Activated B cell treated with CpG ODN at 0.5 μM for 24 hours (primary cell): ENCODE measurements at regions of chr3 and their contacts with region 1.

Region 1: GRCh38 chr3:129439817-129440617 is at the starts of genes IFT122 and MBD4:
- DNase-seq: peak; percentile 92
- ATAC-seq: peak; percentile 83
- H3K4me3 Mint-ChIP-seq: peak within 1 kb of the TSS; percentile 96
- H3K27ac Mint-ChIP-seq: peak within 1 kb of the TSS; percentile 96
- H3K4me1 Mint-ChIP-seq: peaks cover 60% of the 10 kb centered on the region
- H3K27me3 Mint-ChIP-seq: no peaks in the 10 kb centered on the region
- CTCF ChIP-seq: no peak
- total RNA-seq, gene IFT122: 18.7 and 19.2 TPM in 2 replicates
- total RNA-seq, gene MBD4: 86.3 and 98.7 TPM in 2 replicates

Region 2: DNA sequence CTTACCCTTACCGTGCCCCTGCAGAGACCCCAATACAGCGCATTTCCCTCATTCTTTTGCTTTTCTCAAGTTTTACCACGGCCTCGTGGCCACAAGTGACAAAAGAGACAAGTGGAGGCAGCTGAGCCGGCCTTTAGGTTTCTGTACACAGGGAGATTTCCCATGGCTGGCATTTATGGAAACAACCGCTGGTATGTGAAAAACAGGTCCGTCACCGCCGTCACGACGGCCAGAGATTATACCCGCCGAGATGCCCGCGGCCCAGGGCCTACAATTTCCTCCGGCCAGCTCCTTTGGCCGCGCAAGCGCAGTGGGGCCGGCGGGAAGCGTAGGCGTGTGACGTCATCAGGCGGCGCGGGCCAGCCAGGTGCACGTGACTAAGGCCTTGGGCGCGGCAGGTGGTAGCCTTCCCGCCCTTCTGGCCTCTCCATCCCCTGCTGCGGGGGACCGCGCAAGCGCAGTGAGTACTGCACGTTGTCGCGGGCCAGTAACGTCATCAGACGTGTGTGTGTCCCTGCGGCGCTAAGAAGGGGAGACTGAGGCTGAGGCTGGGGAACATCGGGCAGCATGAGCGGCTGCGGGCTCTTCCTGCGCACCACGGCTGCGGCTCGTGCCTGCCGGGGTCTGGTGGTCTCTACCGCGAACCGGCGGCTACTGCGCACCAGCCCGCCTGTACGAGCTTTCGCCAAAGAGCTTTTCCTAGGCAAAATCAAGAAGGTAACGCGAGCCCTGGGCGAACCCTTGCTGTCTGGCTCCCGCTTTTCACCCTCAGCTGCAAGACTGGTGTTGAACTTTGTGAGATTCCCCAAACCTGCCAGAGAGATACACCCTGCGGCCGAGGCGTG is 560.7 kb before region 1 on chr3 and contains the start of gene ACAD9:
- CTCF ChIA-PET with region 1: no interaction called
- POLR2A ChIA-PET with region 1: interaction called, 3 read pairs
- intact Hi-C with region 1: loop called (anchors 2 kb)
- DNase-seq: peak; percentile 99
- ATAC-seq: peak; percentile 94
- H3K4me3 Mint-ChIP-seq: peak within 1 kb of the TSS; percentile 88
- H3K27ac Mint-ChIP-seq: peak within 1 kb of the TSS; percentile 92
- H3K4me1 Mint-ChIP-seq: peaks cover 52% of the 10 kb centered on the region
- H3K27me3 Mint-ChIP-seq: no peaks in the 10 kb centered on the region
- CTCF ChIP-seq: no peak
- total RNA-seq, gene ACAD9: 52.5 and 57.3 TPM in 2 replicates

Region 3: DNA sequence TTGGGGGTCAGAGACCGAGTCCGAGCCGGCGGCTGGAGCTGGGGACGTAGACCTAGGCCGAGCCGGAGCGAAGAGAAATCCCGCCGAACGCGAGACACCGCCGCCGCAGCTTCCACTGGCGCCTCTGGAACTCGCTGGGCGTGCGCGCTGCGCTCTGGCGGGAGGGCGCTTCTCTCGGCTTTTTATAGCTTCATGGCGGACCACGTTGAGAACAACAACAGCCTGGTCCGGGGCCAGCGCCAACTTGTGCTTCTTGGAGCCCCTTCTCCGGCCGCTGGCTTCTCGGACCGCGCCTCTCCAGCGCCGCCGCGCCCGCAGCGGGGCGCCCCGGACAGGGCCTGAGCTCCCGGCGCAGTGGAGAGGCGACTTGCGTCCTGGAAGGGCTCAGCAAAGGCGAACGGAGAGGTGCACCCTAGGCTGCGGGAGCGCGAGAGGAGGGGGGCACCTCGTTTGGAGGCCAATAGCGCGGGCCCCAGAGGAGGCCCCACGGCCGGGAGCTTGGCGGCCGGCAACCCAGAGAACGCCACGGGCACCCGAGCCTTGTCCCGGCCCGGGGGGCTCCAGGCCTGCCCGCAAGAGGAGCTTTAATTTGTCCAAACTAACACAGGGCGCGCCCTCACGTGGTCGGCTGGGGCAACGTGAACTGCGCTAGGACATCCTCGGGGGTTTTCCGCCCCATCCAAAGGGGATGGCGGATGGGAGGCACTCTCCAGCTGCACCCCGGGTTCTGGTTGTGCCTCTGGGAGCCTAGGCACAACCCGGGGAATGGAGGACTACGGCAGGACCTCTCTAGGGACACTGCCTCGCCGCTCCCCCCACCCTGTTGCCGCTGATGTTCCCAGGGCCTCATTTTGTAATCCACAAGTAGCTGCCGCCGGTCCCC is 123.6 kb before region 1 on chr3:
- CTCF ChIA-PET with region 1: no interaction called
- POLR2A ChIA-PET with region 1: interaction called, 9 read pairs
- intact Hi-C with region 1: loop called (anchors 1 kb)
- DNase-seq: peak; percentile 69
- ATAC-seq: peak; percentile 38
- H3K4me3 Mint-ChIP-seq: peak overlapping the region; percentile 76
- H3K27ac Mint-ChIP-seq: no peak overlapping the region
- H3K4me1 Mint-ChIP-seq: peaks cover 24% of the 10 kb centered on the region
- H3K27me3 Mint-ChIP-seq: peaks cover 17% of the 10 kb centered on the region
- CTCF ChIP-seq: no peak

Region 4: GRCh38 chr3:129428376-129429079 is 11.5 kb before region 1 on chr3 and contains the start of gene EFCAB12:
- CTCF ChIA-PET with region 1: interaction called, 4 read pairs
- POLR2A ChIA-PET with region 1: interaction called, 59 read pairs
- intact Hi-C with region 1: loop called (anchors 1 kb)
- DNase-seq: peak; percentile 83
- ATAC-seq: peak; percentile 91
- H3K4me3 Mint-ChIP-seq: peak within 1 kb of the TSS; percentile 85
- H3K27ac Mint-ChIP-seq: peak within 1 kb of the TSS; percentile 83
- H3K4me1 Mint-ChIP-seq: peaks cover 64% of the 10 kb centered on the region
- H3K27me3 Mint-ChIP-seq: no peaks in the 10 kb centered on the region
- CTCF ChIP-seq: no peak
- total RNA-seq, gene EFCAB12: 1.8 and 2.1 TPM in 2 replicates

Region 5: DNA sequence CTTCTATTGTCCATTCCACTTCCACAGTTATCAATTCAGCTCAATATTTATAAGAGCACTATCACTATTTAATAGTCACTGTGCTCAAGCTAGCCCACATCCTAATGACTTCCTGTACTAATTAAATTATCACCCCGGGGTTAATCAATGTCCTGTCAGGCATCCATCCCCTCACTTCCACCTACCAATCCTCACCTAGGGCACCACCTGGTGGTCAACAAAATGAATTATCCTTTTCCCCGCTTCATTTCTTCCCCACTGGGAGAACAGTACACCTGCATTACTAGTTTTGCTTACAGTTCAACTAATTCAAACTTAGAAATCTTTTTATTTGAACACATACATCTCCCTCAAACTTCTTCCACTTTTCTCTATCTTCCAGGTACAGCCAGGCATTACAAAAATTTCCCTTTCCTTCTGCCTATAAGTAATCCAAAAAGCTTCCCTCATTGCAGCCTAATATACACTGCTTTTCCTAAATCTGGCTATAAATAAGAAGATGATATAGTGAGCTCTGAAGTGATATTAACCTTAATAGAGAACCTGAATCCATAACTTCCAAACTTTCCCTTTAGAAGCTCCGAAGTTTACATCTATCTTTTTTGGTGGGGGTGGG is 385.0 kb after region 1 on chr3:
- CTCF ChIA-PET with region 1: no interaction called
- POLR2A ChIA-PET with region 1: no interaction called
- intact Hi-C with region 1: no loop called
- DNase-seq: no peak
- ATAC-seq: peak; percentile 23
- H3K4me3 Mint-ChIP-seq: no peak overlapping the region
- H3K27ac Mint-ChIP-seq: peak overlapping the region; percentile 2
- H3K4me1 Mint-ChIP-seq: peaks cover 50% of the 10 kb centered on the region
- H3K27me3 Mint-ChIP-seq: no peaks in the 10 kb centered on the region
- CTCF ChIP-seq: peak; percentile 78

Region 6: GRCh38 chr3:129893581-129894070 is 453.6 kb after region 1 on chr3 and contains the start of gene TMCC1:
- CTCF ChIA-PET with region 1: no interaction called
- POLR2A ChIA-PET with region 1: interaction called, 4 read pairs
- intact Hi-C with region 1: loop called (anchors 1 kb)
- DNase-seq: peak; percentile 92
- ATAC-seq: peak; percentile 90
- H3K4me3 Mint-ChIP-seq: peak within 1 kb of the TSS; percentile 87
- H3K27ac Mint-ChIP-seq: peak within 1 kb of the TSS; percentile 88
- H3K4me1 Mint-ChIP-seq: peaks cover 34% of the 10 kb centered on the region
- H3K27me3 Mint-ChIP-seq: no peaks in the 10 kb centered on the region
- CTCF ChIP-seq: no peak
- total RNA-seq, gene TMCC1: 25.8 and 25.9 TPM in 2 replicates